ENCODE measurements at regions of chr6 and their contacts with region 1.

Region 1: DNA sequence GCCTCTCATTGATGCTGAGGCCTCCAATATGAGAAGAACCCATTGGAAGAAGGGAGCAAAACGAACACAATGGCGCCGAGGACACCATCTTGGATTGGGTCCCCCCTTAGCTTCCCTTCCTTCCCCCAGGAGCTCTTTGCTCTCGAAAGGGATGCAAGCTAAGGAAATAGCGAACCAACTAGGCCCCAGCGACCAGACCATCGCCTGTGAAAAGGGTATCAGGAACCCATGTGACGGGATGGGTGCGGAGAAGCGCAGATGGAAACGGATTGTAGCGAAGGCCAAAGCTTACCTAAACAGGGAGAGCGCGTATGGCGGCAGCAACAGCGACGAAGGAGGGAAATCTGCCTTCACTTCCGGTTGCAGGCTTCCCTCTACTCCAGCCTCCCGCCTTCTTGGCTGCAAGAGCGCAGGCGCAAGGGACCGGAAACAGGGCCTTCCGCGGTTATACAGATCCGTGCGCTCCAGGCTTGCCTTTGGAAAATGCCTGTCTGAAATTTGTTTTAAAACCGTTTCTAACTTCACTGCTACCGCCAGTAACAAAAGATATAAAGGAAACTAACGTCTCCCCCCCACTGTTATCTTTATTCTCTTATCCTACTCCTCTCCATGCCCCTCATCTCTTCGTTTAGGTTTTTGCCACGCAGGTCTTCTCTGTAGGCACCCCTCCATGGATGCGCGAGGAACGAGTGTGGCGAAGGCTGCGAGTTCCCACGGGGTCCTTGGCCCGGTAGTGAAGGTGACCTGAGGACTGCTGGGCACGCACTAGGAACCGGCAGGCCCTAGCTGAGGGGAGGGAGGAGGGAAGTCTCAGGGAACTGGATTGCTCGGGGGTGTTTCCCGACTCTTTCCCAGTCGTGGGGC is at the start of gene DDX39B:
- DNase-seq: peak; percentile 96 to 97
- ATAC-seq: peak; percentile 94 to 95
- H3K4me3 ChIP-seq: peak within 1 kb of the TSS; percentile 81 to 91 (median 85)
- H3K27ac ChIP-seq: peak within 1 kb of the TSS; percentile 96 to 98 (median 96)
- H3K4me1 ChIP-seq: peaks cover 31 to 38% of the 10 kb centered on the region in 2 donors
- H3K27me3 ChIP-seq: no peaks in the 10 kb centered on the region
- CTCF ChIP-seq: no peak
- POLR2A ChIP-seq: peak; percentile 72 to 77
- total RNA-seq, gene DDX39B: 107 to 198 (median 144) TPM

Region 2: GRCh38 chr6:30066577-30067459 is 1475.1 kb before region 1 on chr6 and contains the start of gene PPP1R11:
- in situ Hi-C with region 1: no loop called
- intact Hi-C with region 1: loop called (anchors 10 kb)
- DNase-seq: peak; percentile 97 to 98
- ATAC-seq: peak; percentile 95 to 96
- H3K4me3 ChIP-seq: peak within 1 kb of the TSS; percentile 79 to 95 (median 86)
- H3K27ac ChIP-seq: peak within 1 kb of the TSS; percentile 85 to 93 (median 90)
- H3K4me1 ChIP-seq: peaks cover 29 to 33% of the 10 kb centered on the region in 2 donors
- H3K27me3 ChIP-seq: peaks cover 9 to 16% (median 10%) of the 10 kb centered on the region in 3 donors
- CTCF ChIP-seq: peak in 1 of 5 experiments; percentile 8
- POLR2A ChIP-seq: peak; percentile 57 to 80
- total RNA-seq, gene PPP1R11: 34.0 to 72.4 (median 49.9) TPM

Region 3: DNA sequence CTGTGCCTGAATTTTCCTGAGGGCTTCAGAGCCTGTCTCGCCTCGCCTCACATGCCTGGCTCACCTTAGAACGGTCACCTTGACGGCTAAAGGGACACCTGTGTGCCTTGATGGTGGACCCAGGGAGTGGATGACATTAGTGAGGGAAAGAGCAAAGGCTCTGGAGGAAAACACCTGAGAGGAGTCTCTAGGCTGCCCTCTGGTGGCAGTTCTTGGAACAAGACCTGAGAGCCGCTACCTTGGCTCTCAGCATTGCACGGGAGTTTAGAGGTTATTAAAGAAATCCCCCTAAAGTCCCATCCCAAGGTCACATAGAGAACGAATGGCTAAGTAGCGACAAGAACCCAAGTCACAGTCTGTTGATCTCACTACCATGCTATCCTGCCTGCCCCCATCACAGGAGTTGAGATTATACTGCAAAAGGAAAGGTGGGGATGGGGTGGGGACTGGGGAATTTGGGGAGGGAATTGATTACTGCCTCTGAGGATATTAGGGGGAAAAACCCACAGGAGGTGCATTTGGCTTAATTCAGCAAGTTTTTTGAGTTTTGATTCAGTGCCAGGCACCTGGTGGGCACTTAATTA is 413.7 kb before region 1 on chr6:
- in situ Hi-C with region 1: no loop called
- intact Hi-C with region 1: no loop called
- DNase-seq: peak in 1 of 2 donors; percentile 47
- ATAC-seq: peak; percentile 72 to 76
- H3K4me3 ChIP-seq: no peak overlapping the region
- H3K27ac ChIP-seq: no peak overlapping the region
- H3K4me1 ChIP-seq: peaks cover 0 to 2% of the 10 kb centered on the region in 2 donors
- H3K27me3 ChIP-seq: no peaks in the 10 kb centered on the region
- CTCF ChIP-seq: peak; percentile 36 to 92 (median 69)
- POLR2A ChIP-seq: no peak

Region 4: DNA sequence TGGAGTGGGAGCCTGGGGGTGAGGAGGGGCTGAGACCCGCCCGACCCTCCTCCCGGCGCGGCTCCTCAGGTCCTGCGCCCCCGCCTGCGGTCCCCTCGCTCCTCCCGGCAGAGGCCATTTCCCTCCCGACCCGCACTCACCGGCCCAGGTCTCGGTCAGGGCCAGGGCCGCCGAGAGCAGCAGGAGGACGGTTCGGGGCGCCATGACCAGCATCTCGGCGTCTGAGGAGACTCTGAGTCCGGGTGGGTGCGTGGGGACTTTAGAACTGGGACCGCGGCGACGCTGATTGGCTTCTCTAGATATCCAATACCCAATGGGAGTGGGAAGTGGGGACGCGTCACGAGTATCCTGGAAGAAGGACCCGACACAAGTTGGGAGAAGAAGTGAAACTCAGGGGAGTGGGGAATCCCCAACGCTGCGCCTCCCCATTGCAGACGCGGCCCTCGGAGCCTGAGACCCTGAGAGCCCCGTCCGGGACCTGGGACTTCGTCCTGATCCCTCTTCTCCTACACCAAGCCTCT is 184.9 kb before region 1 on chr6 and contains the start of gene HLA-B:
- in situ Hi-C with region 1: no loop called
- intact Hi-C with region 1: no loop called
- DNase-seq: peak; percentile 52 to 77
- ATAC-seq: peak; percentile 97 to 99
- H3K4me3 ChIP-seq: peak within 1 kb of the TSS; percentile 63 to 90 (median 68)
- H3K27ac ChIP-seq: peak within 1 kb of the TSS; percentile 68 to 92 (median 75)
- H3K4me1 ChIP-seq: no peaks in the 10 kb centered on the region
- H3K27me3 ChIP-seq: peaks cover 0 to 14% (median 3%) of the 10 kb centered on the region in 3 donors
- CTCF ChIP-seq: no peak
- POLR2A ChIP-seq: peak in 1 of 2 donors; percentile 59
- total RNA-seq, gene HLA-B: 182 to 300 (median 192) TPM

Region 5: GRCh38 chr6:31493875-31494694 is 47.8 kb before region 1 on chr6:
- in situ Hi-C with region 1: loop called in 1 of 4 experiments (anchors 5 kb)
- intact Hi-C with region 1: loop called (anchors 5 kb)
- DNase-seq: peak; percentile 50 to 59
- ATAC-seq: peak; percentile 71 to 75
- H3K4me3 ChIP-seq: peak overlapping the region; percentile 48 to 64 (median 56)
- H3K27ac ChIP-seq: peak overlapping the region; percentile 44 to 60 (median 58)
- H3K4me1 ChIP-seq: peaks cover 0 to 16% of the 10 kb centered on the region in 2 donors
- H3K27me3 ChIP-seq: peaks cover 10 to 41% (median 35%) of the 10 kb centered on the region in 3 donors
- CTCF ChIP-seq: peak; percentile 50 to 75 (median 60)
- POLR2A ChIP-seq: no peak

Region 6: DNA sequence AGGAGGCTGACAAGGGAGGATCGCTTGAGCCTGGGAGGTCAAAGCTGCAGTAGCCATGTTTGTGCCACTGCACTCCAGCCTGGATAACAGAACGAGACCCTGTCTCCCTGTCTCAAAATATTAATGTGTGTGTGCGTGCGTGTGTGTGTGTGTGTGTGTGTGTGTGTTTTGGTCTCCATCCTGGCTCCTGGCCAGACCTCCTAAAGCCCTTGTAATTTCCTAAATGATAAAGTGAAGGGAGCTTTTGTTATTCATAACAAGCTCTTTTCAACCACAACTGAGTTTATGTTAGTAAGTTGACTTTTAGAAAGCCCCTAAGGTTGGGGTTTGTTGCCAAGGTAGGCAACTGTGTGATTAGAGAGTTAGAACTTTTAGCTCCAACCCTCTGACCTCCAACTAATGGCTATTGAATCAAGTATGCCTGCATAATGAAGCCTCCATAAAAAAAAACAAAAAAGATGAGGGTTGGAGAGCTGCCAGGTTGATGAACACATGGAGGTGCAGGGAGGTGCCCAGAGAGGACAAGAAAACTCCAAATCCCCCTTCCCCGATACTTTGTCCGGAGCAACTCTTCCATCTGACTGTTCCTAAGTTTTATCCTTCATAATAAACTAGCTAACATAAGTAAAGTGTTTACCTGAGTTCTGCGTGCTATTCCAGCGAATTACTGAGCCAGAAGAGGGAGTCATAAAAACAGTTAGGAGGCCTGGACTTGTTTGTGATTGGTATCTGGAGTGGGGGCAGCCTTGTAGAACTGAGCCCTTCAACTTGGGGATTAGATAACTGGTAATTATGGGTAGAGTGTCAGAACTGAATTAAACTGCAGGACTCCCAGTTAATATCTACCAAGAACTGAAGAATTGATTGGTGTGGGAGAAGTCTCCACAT is 67.9 kb after region 1 on chr6:
- in situ Hi-C with region 1: loop called in 1 of 4 experiments (anchors 10 kb)
- intact Hi-C with region 1: no loop called
- DNase-seq: no peak
- ATAC-seq: no peak
- H3K4me3 ChIP-seq: no peak overlapping the region
- H3K27ac ChIP-seq: no peak overlapping the region
- H3K4me1 ChIP-seq: no peaks in the 10 kb centered on the region
- H3K27me3 ChIP-seq: no peaks in the 10 kb centered on the region
- CTCF ChIP-seq: no peak
- POLR2A ChIP-seq: no peak

Region 7: DNA sequence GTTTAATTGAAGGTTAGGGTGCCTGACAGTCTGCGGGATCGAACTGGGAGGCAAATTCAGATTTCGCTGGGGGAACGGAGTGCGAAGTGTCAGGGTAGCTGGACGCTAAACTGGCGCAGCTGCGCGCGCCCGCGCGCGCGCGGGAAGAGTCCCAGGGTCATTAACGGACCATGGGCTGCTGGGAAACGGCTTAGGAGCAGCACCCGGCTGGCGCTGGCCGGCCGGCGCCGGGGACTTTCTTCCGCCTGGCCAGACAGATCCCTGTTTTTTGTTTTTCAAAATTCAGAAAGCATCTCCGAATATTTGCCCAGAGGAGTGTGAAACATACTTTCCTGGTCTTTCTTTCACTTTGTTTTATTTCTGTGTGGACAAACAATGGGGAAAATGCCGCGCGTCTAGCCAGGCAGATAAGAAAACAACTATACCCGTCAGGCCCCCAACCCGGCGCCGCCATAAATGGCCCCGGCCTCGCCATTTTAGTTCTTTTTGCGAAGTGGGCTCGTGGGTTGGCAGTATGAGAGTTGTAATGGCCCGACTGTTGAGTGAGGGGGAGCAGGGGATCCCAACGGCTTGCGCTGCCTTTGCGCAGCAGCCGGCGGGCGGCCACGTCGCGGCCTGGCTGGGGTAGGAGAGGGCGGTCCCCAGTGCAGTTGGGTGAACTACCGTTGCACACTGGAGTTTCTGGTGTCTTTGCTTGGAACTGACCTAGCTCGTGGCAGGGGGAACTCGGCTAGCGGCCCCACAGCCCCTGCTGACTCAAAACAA is 292.7 kb after region 1 on chr6:
- in situ Hi-C with region 1: no loop called
- intact Hi-C with region 1: loop called (anchors 10 kb)
- DNase-seq: peak; percentile 76 to 87
- ATAC-seq: peak; percentile 86 to 87
- H3K4me3 ChIP-seq: peak overlapping the region; percentile 68 to 96 (median 84)
- H3K27ac ChIP-seq: peak overlapping the region; percentile 87 to 97 (median 92)
- H3K4me1 ChIP-seq: peaks cover 40 to 47% of the 10 kb centered on the region in 2 donors
- H3K27me3 ChIP-seq: no peaks in the 10 kb centered on the region
- CTCF ChIP-seq: peak in 1 of 5 experiments; percentile 9
- POLR2A ChIP-seq: peak; percentile 73 to 74